K562 (cell line): ENCODE measurements at regions of chr2 and their contacts with region 1.

Region 1: DNA sequence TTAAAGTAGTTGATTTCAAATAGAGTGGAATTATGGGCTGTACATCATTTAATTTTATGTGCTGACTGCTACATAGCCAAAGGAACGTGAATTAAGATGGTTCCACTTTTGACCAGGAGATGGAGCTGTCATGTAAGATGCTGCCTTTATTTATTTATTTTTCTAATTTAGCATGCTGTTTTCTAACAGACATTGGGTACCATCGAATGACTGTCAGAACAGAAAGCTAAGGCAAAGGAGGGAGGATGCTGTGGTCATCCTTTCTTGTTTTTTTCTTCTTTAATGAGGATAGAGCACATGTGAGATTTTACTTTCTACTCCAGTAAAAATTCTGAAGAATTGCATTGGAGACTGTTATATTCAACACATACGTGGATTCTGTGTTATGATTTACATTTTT is at the start of gene SCN2A:
- DNase-seq: peak; percentile 7 to 43 (median 9)
- ATAC-seq: peak; percentile 42; the same call in 1 of the 3 replicates
- H3K4me3 ChIP-seq: no peak within 1 kb of the TSS
- H3K27ac ChIP-seq: no peak within 1 kb of the TSS
- H3K4me1 ChIP-seq: no peaks in the 10 kb centered on the region
- H3K27me3 ChIP-seq: no peaks in the 10 kb centered on the region
- CTCF ChIP-seq: peak; percentile 13 to 60 (median 46); a peak in 5 of 6 replicates
- EP300 ChIP-seq: no peak
- POLR2A ChIP-seq: no peak
- RAD21 ChIP-seq: peak; percentile 70 to 75
- polyA plus RNA-seq, gene SCN2A: 0.08 to 0.18 TPM

Region 2: DNA sequence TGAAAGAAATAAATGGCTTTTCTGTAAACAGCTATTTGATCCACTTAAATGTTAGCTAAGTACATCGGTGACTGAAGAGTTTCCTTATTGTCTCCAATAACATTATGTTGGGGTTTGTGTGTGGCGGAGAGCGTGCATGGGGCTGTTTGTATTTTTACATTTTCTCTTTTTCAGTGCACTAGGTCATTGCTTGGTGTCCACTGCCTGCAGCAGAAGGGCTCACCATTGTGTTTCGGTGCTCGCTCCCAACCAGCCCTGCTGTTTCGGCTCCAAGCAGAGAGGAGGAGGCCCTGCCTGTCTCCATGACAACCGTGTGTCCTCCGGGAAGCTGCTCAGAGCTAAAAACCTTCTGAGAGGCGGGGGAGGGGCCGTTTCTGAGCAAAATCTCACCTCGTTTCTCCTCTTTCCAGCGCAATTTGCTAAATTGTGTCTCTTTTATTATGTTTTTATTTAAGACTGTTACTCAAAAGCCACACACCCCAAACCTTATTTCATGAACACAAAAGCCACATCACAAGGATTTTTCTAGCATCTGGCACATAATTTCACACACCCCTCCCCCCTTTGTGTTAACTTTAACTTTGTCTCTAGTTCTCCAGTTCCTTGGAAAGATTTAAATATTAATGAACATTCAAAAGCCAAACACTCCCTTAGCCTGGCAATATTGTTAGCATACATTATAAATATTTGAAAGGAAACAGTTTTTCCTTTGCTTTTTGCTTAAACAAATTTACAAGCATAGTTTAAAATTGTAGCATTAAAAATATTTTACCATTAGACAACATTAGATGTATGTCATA is 171.1 kb before region 1 on chr2:
- CTCF ChIA-PET with region 1: no interaction called
- POLR2A ChIA-PET with region 1: no interaction called
- in situ Hi-C with region 1: no loop called
- intact Hi-C with region 1: no loop called
- DNase-seq: peak in 1 of 4 experiments; percentile 26
- ATAC-seq: no peak
- H3K4me3 ChIP-seq: no peak overlapping the region
- H3K27ac ChIP-seq: no peak overlapping the region
- H3K4me1 ChIP-seq: no peaks in the 10 kb centered on the region
- H3K27me3 ChIP-seq: no peaks in the 10 kb centered on the region
- CTCF ChIP-seq: no peak
- EP300 ChIP-seq: no peak
- POLR2A ChIP-seq: no peak
- RAD21 ChIP-seq: no peak

Region 3: DNA sequence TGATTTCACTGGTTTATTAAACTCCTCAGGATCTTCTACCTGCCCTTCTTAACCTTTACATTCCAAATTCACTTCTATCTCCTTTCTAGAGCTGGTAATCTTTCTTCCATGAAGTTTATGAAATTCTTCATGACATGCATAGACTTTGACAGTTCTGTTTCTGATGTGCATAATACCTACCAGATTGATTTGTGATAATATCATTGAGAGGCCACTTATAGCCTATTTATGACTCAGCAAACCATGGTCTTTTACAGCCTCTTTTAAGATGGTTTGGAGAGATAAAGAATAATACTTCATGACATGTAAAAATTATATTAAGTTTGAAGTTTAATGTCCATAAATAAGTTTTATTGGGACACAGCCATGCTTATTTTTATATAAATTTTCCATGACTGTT is 13.9 kb after region 1 on chr2:
- CTCF ChIA-PET with region 1: no interaction called
- POLR2A ChIA-PET with region 1: no interaction called
- in situ Hi-C with region 1: no loop called
- intact Hi-C with region 1: no loop called
- DNase-seq: no peak
- ATAC-seq: no peak
- H3K4me3 ChIP-seq: no peak overlapping the region
- H3K27ac ChIP-seq: no peak overlapping the region
- H3K4me1 ChIP-seq: no peaks in the 10 kb centered on the region
- H3K27me3 ChIP-seq: no peaks in the 10 kb centered on the region
- CTCF ChIP-seq: no peak
- EP300 ChIP-seq: no peak
- POLR2A ChIP-seq: no peak
- RAD21 ChIP-seq: no peak

Region 4: DNA sequence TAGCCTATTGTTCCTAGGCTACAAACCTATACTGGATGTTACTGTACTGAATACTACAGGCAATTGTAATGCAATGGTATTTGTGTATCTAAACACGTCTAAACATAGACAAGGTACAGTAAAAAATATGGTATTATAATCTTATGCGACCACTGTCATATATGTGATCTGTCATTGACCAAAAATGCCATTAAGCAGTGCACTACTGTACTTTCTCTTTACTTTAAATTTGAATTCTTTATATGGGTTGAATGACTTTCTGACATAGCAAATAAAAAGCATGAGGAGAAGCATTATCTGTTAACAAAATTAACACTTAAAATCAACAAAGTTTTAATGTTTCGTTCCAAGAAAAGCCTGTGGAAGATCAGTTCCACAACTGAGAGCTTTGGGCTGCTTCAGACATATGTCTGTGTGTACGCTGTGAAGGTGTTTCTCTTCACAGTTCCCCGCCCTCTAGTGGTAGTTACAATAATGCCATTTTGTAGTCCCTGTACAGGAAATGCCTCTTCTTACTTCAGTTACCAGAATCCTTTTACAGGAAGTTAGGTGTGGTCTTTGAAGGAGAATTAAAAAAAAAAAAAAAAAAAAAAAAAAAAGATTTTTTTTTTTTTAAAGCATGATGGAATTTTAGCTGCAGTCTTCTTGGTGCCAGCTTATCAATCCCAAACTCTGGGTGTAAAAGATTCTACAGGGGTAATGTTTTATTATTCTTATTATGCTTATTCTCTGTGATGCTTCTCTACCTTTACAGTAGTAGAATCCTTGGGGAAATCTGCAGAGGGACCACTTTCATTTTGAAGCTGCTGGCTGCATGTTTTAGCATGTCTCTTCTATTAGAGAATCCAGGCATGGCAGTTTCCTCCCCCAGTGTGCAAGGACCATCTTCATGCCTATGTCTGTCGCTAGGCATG is 54.5 kb after region 1 on chr2:
- CTCF ChIA-PET with region 1: interaction called, 3 read pairs
- POLR2A ChIA-PET with region 1: no interaction called
- in situ Hi-C with region 1: no loop called
- intact Hi-C with region 1: loop called (anchors 1 kb)
- DNase-seq: peak; percentile 21 to 55 (median 34)
- ATAC-seq: peak; percentile 88
- H3K4me3 ChIP-seq: no peak overlapping the region
- H3K27ac ChIP-seq: no peak overlapping the region
- H3K4me1 ChIP-seq: no peaks in the 10 kb centered on the region
- H3K27me3 ChIP-seq: no peaks in the 10 kb centered on the region
- CTCF ChIP-seq: peak; percentile 26 to 58 (median 47); a peak in 4 of 6 replicates
- EP300 ChIP-seq: no peak
- POLR2A ChIP-seq: no peak
- RAD21 ChIP-seq: peak; percentile 15 to 39; a peak in 2 of 4 replicates

Region 5: GRCh38 chr2:165648801-165649200 is 409.6 kb after region 1 on chr2:
- CTCF ChIA-PET with region 1: no interaction called
- POLR2A ChIA-PET with region 1: no interaction called
- in situ Hi-C with region 1: no loop called
- intact Hi-C with region 1: no loop called
- DNase-seq: no peak
- ATAC-seq: no peak
- H3K4me3 ChIP-seq: no peak overlapping the region
- H3K27ac ChIP-seq: no peak overlapping the region
- H3K4me1 ChIP-seq: no peaks in the 10 kb centered on the region
- H3K27me3 ChIP-seq: no peaks in the 10 kb centered on the region
- CTCF ChIP-seq: no peak
- EP300 ChIP-seq: no peak
- POLR2A ChIP-seq: no peak
- RAD21 ChIP-seq: no peak

Region 6: GRCh38 chr2:165874445-165875039 is 635.3 kb after region 1 on chr2:
- CTCF ChIA-PET with region 1: interaction called, 4 read pairs
- POLR2A ChIA-PET with region 1: no interaction called
- in situ Hi-C with region 1: no loop called
- intact Hi-C with region 1: loop called (anchors 5 kb)
- DNase-seq: peak; percentile 22 to 43 (median 34)
- ATAC-seq: peak; percentile 89
- H3K4me3 ChIP-seq: no peak overlapping the region
- H3K27ac ChIP-seq: no peak overlapping the region
- H3K4me1 ChIP-seq: no peaks in the 10 kb centered on the region
- H3K27me3 ChIP-seq: no peaks in the 10 kb centered on the region
- CTCF ChIP-seq: peak; percentile 29 to 60 (median 52); a peak in 5 of 6 replicates
- EP300 ChIP-seq: no peak
- POLR2A ChIP-seq: no peak
- RAD21 ChIP-seq: peak; percentile 55 to 60

Region 7: GRCh38 chr2:166127217-166128155 is 888.3 kb after region 1 on chr2 and contains the start of gene SCN1A:
- CTCF ChIA-PET with region 1: interaction called, 4 read pairs
- POLR2A ChIA-PET with region 1: no interaction called
- in situ Hi-C with region 1: no loop called
- intact Hi-C with region 1: loop called (anchors 2 kb)
- DNase-seq: peak; percentile 18 to 41 (median 30)
- ATAC-seq: peak; percentile 58; the same call in 2 of the 3 replicates
- H3K4me3 ChIP-seq: no peak within 1 kb of the TSS
- H3K27ac ChIP-seq: no peak within 1 kb of the TSS
- H3K4me1 ChIP-seq: no peaks in the 10 kb centered on the region
- H3K27me3 ChIP-seq: no peaks in the 10 kb centered on the region
- CTCF ChIP-seq: peak; percentile 38 to 82 (median 64); a peak in 5 of 6 replicates
- EP300 ChIP-seq: no peak
- POLR2A ChIP-seq: no peak
- RAD21 ChIP-seq: peak; percentile 54 to 55
- polyA plus RNA-seq, gene SCN1A: not detected